PC-9 (cell line): ENCODE measurements at regions of chr5 and their contacts with region 1.

Region 1: DNA sequence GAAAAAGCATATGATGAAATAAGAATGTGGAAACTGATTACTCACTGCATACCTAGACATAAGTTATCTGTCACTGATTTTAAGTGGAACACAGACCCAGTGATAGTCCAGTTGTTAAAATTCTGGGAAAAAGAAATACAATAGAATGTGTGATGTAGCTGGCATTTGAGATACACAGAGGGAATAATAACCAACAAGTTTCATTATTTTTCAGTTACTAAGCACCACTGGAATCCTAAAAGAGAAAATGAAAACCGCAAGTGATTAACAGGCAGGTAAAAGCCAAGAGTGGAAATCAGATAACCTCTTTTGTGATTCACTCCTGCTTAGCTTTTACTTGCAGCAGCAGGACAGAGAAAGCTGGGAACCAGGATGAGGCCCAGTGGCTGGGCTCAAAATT is 994.0 kb upstream of the SEMA6A start:
- DNase-seq: no peak
- H3K4me3 ChIP-seq: no peak overlapping the region
- H3K27ac ChIP-seq: no peak overlapping the region
- H3K4me1 ChIP-seq: no peaks in the 10 kb centered on the region
- H3K27me3 ChIP-seq: no peaks in the 10 kb centered on the region
- CTCF ChIP-seq: no peak

Region 2: DNA sequence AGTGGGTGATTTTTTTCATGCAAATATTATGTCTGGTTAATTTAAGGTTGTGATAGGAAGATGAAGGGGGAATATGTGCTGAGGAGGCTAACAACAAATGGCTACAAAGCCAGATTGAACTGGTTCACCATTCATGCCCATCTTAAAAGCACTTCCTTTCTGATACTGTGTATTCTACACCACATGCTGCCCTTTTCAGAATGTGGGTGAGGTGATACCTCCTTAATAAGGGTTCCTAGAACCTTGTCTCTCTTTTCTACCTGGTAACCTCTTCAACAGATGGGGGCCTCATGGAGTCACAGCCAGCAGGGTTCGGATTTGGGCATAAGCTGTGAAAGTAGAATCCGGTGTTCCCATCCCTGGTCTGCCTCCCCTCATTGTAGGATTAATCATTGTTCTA is 70.0 kb after region 1 on chr5:
- CTCF ChIA-PET with region 1: interaction called, 11 read pairs
- POLR2A ChIA-PET with region 1: no interaction called
- intact Hi-C with region 1: no loop called
- DNase-seq: no peak
- H3K4me3 ChIP-seq: no peak overlapping the region
- H3K27ac ChIP-seq: no peak overlapping the region
- H3K4me1 ChIP-seq: no peaks in the 10 kb centered on the region
- H3K27me3 ChIP-seq: no peaks in the 10 kb centered on the region
- CTCF ChIP-seq: no peak